Endothelial cell of umbilical vein (primary cell): ENCODE measurements at regions of chr17 and their contacts with region 1.

Region 1: DNA sequence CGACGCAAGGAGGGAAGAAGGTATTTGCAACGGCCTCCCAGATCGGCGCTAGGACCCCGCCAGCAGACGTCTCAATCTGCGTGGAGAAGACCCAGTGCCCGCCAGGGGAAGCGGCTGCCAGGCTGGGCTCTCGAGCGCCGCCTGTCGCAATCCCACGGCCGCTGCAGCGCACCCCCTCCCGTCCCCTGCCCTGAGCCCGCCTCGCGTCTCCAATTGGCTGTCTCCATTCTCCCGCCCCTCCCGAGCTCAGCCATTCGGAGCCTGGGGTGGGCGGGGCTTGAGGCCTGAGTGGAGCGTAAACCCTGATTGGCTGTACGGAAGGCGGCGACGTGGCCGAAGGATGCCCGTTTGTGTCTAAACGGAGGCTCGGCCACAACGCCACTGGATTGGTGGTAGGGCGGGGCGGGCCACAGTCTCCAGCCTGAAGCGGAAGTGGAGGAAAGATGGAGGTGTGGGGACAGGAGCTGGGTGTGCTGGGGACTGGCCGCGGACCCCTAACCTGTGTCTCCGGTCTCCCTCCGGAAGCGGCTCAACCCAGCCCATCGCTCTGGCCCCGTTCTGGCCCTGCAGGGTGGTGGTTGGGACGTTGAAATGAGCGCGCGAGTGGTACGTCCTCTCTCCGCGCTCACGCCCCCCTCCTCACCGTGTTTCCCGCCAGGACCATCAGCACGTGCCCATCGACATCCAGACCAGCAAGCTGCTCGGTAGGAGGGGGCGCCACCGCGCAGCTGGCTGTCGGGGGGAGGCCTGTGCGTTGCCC is at the start of gene CDK5RAP3:
- DNase-seq: peak; percentile 100
- H3K4me3 ChIP-seq: peak within 1 kb of the TSS; percentile 9 to 86 (median 55)
- H3K27ac ChIP-seq: peak within 1 kb of the TSS; percentile 48
- H3K4me1 ChIP-seq: peaks cover 6% of the 10 kb centered on the region
- H3K27me3 ChIP-seq: no peaks in the 10 kb centered on the region
- CTCF ChIP-seq: peak; percentile 97 to 99
- POLR2A ChIP-seq: peak; percentile 81
- total RNA-seq, gene CDK5RAP3: 109 and 122 TPM in 2 replicates

Region 2: DNA sequence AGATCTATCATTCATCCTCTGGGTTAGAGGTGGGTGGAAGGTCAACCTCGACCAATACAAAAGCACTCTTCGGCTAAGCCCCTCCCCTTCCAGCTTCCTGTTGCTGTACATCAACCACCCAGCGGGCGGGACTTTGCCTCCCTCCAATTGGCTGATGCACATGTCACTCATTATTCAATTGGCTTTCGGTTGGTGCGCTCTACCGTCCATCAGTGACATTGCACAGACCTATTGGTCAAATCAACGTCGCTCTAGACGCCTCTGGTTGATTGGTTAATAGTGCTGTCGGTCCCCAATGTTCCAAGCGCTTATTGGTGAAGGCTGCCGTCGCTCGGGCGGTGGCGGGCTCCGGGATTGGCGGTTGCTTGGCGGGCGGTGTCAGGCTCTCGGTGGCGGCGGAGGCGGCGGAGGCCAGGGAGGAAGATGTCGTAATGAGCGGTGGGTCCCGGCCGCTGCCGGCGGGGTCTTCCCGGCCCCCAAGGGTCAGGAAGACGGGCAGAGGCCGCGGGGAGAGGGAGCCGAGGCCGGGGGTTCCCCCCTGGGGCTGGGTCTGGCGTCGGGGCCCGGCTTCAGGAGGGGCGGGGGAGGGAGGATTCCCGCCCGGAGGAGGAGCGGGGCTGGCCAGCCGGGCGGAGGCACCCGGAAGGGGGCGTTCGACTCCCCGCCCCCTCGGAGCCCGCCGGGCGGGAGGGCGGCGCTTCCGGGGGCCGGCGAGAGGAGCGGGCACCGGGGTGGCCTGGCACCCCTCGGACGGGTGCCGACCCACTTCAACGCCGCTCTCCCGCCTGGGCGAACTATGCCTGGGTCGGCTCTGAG is 74.8 kb before region 1 on chr17 and contains the start of gene SP2:
- CTCF ChIA-PET with region 1: interaction called, 10 read pairs
- POLR2A ChIA-PET with region 1: no interaction called
- dilution Hi-C with region 1: no loop called
- intact Hi-C with region 1: loop called (anchors 1 kb)
- DNase-seq: peak; percentile 100
- H3K4me3 ChIP-seq: peak within 1 kb of the TSS; percentile 51 to 90 (median 84)
- H3K27ac ChIP-seq: peak within 1 kb of the TSS; percentile 75
- H3K4me1 ChIP-seq: peaks cover 15% of the 10 kb centered on the region
- H3K27me3 ChIP-seq: no peaks in the 10 kb centered on the region
- CTCF ChIP-seq: no peak
- POLR2A ChIP-seq: peak; percentile 60
- total RNA-seq, gene SP2: 18.5 and 18.6 TPM in 2 replicates

Region 3: GRCh38 chr17:47957591-47958428 is 13.1 kb before region 1 on chr17 and contains the start of gene PRR15L:
- CTCF ChIA-PET with region 1: interaction called, 64 read pairs
- POLR2A ChIA-PET with region 1: no interaction called
- dilution Hi-C with region 1: no loop called
- intact Hi-C with region 1: no loop called
- DNase-seq: no peak
- H3K4me3 ChIP-seq: no peak within 1 kb of the TSS
- H3K27ac ChIP-seq: no peak within 1 kb of the TSS
- H3K4me1 ChIP-seq: no peaks in the 10 kb centered on the region
- H3K27me3 ChIP-seq: peaks cover 2 to 9% of the 10 kb centered on the region in 2 experiments
- CTCF ChIP-seq: no peak
- POLR2A ChIP-seq: no peak
- total RNA-seq, gene PRR15L: not detected in 2 replicates

Region 4: DNA sequence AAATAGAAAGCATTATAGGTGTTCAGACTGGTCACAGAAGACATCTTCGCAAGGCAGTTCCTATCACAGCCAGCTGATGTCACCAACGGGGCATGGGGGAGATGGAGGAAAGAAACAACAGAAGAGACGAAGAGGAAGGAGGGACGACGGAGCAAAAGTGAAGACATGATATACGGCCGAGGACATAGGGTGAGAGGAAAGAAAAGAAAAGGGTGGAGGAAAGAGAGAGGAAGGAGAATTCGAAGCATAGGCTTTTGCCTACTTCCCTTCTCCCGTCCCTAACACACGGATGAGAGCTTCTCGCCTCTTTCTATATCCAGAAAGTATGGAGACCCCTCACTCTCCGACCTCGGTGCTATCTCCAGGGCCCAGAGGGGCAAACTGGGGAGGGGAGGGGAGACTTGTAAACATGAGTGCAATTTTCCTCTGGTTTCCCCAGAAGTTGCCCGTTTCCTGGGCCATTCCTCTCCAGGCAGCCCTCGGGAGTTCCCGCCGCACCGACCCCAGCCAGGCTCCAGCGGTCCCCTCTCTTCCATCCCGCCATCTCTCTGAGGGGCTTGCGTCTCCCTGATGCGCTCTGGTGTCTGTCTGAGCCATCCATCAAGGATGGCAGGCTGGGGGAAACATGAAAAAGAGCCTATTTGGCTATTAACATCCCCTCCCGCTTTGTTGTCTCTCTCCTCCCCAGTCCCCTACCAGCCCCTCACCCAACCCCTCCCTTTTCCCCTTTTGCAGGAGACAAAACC is 40.7 kb after region 1 on chr17:
- CTCF ChIA-PET with region 1: interaction called, 469 read pairs
- POLR2A ChIA-PET with region 1: no interaction called
- dilution Hi-C with region 1: no loop called
- intact Hi-C with region 1: no loop called
- DNase-seq: peak; percentile 43
- H3K4me3 ChIP-seq: peak overlapping the region; percentile 31 to 64 (median 61)
- H3K27ac ChIP-seq: no peak overlapping the region
- H3K4me1 ChIP-seq: peaks cover 9% of the 10 kb centered on the region
- H3K27me3 ChIP-seq: peaks cover 0 to 2% of the 10 kb centered on the region in 2 experiments
- CTCF ChIP-seq: peak; percentile 36 to 49
- POLR2A ChIP-seq: no peak